CD4-positive, alpha-beta T cell (primary cell): ENCODE measurements at regions of chr17 and their contacts with region 1.

Region 1: GRCh38 chr17:79796763-79797491 is at the start of gene CBX8:
- DNase-seq: peak; percentile 97 to 100 (median 99)
- ATAC-seq: peak; percentile 80
- H3K4me3 ChIP-seq: peak within 1 kb of the TSS; percentile 69
- H3K4me3 Mint-ChIP-seq: peak within 1 kb of the TSS; percentile 93
- H3K27ac ChIP-seq: peak within 1 kb of the TSS in 1 of 2 donors; percentile 7
- H3K27ac Mint-ChIP-seq: peak within 1 kb of the TSS; percentile 80
- H3K4me1 ChIP-seq: peaks cover 62% of the 10 kb centered on the region
- H3K4me1 Mint-ChIP-seq: peaks cover 49% of the 10 kb centered on the region
- H3K27me3 ChIP-seq: peaks cover 50 to 58% of the 10 kb centered on the region in 2 experiments
- H3K27me3 Mint-ChIP-seq: peaks cover 50% of the 10 kb centered on the region
- CTCF ChIP-seq: no peak
- total RNA-seq, gene CBX8: 5.3 to 6.5 TPM

Region 2: GRCh38 chr17:79741751-79742588 is 55.0 kb before region 1 on chr17:
- CTCF ChIA-PET with region 1: interaction called, 6 read pairs
- POLR2A ChIA-PET with region 1: interaction called, 5 read pairs
- intact Hi-C with region 1: loop called (anchors 2 to 5 kb)
- DNase-seq: peak; percentile 59 to 85 (median 70)
- ATAC-seq: peak; percentile 55
- H3K4me3 ChIP-seq: no peak overlapping the region
- H3K4me3 Mint-ChIP-seq: no peak overlapping the region
- H3K27ac ChIP-seq: no peak overlapping the region
- H3K27ac Mint-ChIP-seq: no peak overlapping the region
- H3K4me1 ChIP-seq: peaks cover 29% of the 10 kb centered on the region
- H3K4me1 Mint-ChIP-seq: peaks cover 14% of the 10 kb centered on the region
- H3K27me3 ChIP-seq: peaks cover 29 to 30% of the 10 kb centered on the region in 2 experiments
- H3K27me3 Mint-ChIP-seq: peaks cover 54% of the 10 kb centered on the region
- CTCF ChIP-seq: peak; percentile 94

Region 3: GRCh38 chr17:79777894-79778503 is 18.9 kb before region 1 on chr17 and contains the start of gene CBX2:
- CTCF ChIA-PET with region 1: interaction called, 4 read pairs
- POLR2A ChIA-PET with region 1: interaction called, 9 read pairs
- intact Hi-C with region 1: loop called (anchors 2 kb)
- DNase-seq: peak; percentile 58 to 93 (median 75)
- ATAC-seq: peak; percentile 88
- H3K4me3 ChIP-seq: peak within 1 kb of the TSS; percentile 41
- H3K4me3 Mint-ChIP-seq: peak within 1 kb of the TSS; percentile 85
- H3K27ac ChIP-seq: no peak within 1 kb of the TSS
- H3K27ac Mint-ChIP-seq: peak within 1 kb of the TSS; percentile 27
- H3K4me1 ChIP-seq: peaks cover 26% of the 10 kb centered on the region
- H3K4me1 Mint-ChIP-seq: peaks cover 27% of the 10 kb centered on the region
- H3K27me3 ChIP-seq: peaks cover 61 to 82% of the 10 kb centered on the region in 2 experiments
- H3K27me3 Mint-ChIP-seq: peaks cover 91% of the 10 kb centered on the region
- CTCF ChIP-seq: no peak
- total RNA-seq, gene CBX2: 0.31 TPM in 1 of 2 experiments, not detected in the other

Region 4: GRCh38 chr17:79810130-79811010 is 13.4 kb after region 1 on chr17:
- CTCF ChIA-PET with region 1: interaction called, 4 read pairs
- POLR2A ChIA-PET with region 1: interaction called, 29 read pairs
- intact Hi-C with region 1: loop called in 1 of 2 experiments (anchors 2 kb)
- DNase-seq: peak; percentile 48 to 93 (median 74)
- ATAC-seq: peak; percentile 92
- H3K4me3 ChIP-seq: no peak overlapping the region
- H3K4me3 Mint-ChIP-seq: peak overlapping the region; percentile 62
- H3K27ac ChIP-seq: no peak overlapping the region
- H3K27ac Mint-ChIP-seq: no peak overlapping the region
- H3K4me1 ChIP-seq: peaks cover 65% of the 10 kb centered on the region
- H3K4me1 Mint-ChIP-seq: peaks cover 36% of the 10 kb centered on the region
- H3K27me3 ChIP-seq: peaks cover 81 to 83% of the 10 kb centered on the region in 2 experiments
- H3K27me3 Mint-ChIP-seq: peaks cover 77% of the 10 kb centered on the region
- CTCF ChIP-seq: no peak

Region 5: DNA sequence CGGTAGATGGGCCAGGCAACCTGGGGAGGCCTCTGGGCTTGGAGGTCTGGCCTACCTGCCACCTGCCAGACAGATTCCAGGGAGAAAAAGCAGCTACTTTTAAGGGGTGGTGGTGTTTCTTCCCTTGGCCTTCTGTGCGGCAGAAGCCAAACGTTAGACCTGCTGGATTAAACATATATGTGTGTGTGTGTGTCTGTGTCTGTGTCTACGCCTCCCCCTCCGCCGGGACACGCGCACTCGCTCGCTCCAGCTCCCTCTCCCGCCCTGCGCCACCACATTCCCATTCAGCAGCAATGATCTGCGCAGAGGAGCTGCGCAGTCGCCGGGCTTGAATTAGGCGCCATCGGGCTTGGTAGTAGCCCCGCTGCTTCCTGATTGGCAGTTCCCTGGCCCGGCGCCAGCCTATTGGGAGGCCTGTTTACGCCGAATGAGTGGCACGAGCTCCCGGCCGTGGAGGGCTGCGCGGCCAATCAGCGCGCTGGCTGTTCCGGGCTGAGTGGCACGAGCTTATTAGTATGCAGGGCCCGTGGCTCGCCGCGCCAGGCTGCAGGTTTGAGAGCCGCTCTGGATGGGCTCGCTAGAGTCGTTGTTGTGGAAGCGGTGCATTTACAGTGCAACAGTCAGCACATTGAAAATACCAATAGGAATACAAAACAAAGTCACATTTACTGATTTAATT is 1598.1 kb after region 1 on chr17 and contains the start of gene BAHCC1:
- CTCF ChIA-PET with region 1: no interaction called
- POLR2A ChIA-PET with region 1: no interaction called
- intact Hi-C with region 1: loop called in 1 of 2 experiments (anchors 5 kb)
- DNase-seq: peak; percentile 53 to 90 (median 72)
- ATAC-seq: peak; percentile 70
- H3K4me3 ChIP-seq: peak within 1 kb of the TSS; percentile 12
- H3K4me3 Mint-ChIP-seq: peak within 1 kb of the TSS; percentile 76
- H3K27ac ChIP-seq: no peak within 1 kb of the TSS
- H3K27ac Mint-ChIP-seq: peak within 1 kb of the TSS; percentile 68
- H3K4me1 ChIP-seq: peaks cover 66% of the 10 kb centered on the region
- H3K4me1 Mint-ChIP-seq: peaks cover 30% of the 10 kb centered on the region
- H3K27me3 ChIP-seq: peaks cover 65 to 88% of the 10 kb centered on the region in 2 experiments
- H3K27me3 Mint-ChIP-seq: peaks cover 59% of the 10 kb centered on the region
- CTCF ChIP-seq: no peak
- total RNA-seq, gene BAHCC1: 0.20 to 0.41 TPM